ENCODE measurements at regions of chr9 and their contacts with region 1.

Region 1: GRCh38 chr9:73685786-73686185 is 534.1 kb downstream of the ANXA1 start:
- DNase-seq: no peak
- ATAC-seq: no peak
- H3K4me3 ChIP-seq: no peak overlapping the region
- H3K4me3 Mint-ChIP-seq: no peak overlapping the region
- H3K27ac ChIP-seq: no peak overlapping the region
- H3K27ac Mint-ChIP-seq: no peak overlapping the region
- H3K4me1 ChIP-seq: no peaks in the 10 kb centered on the region
- H3K4me1 Mint-ChIP-seq: no peaks in the 10 kb centered on the region
- H3K27me3 ChIP-seq: no peaks in the 10 kb centered on the region
- H3K27me3 Mint-ChIP-seq: no peaks in the 10 kb centered on the region

Region 2: GRCh38 chr9:73067074-73067473 is 618.7 kb before region 1 on chr9:
- CTCF ChIA-PET with region 1: no interaction called
- POLR2A ChIA-PET with region 1: no interaction called
- DNase-seq: no peak
- ATAC-seq: no peak
- H3K4me3 ChIP-seq: no peak overlapping the region
- H3K4me3 Mint-ChIP-seq: no peak overlapping the region
- H3K27ac ChIP-seq: no peak overlapping the region
- H3K27ac Mint-ChIP-seq: no peak overlapping the region
- H3K4me1 ChIP-seq: no peaks in the 10 kb centered on the region
- H3K4me1 Mint-ChIP-seq: no peaks in the 10 kb centered on the region
- H3K27me3 ChIP-seq: peaks cover 0 to 6% of the 10 kb centered on the region in 2 experiments
- H3K27me3 Mint-ChIP-seq: peaks cover 15 to 20% of the 10 kb centered on the region in 2 donors

Region 3: GRCh38 chr9:73079326-73079725 is 606.5 kb before region 1 on chr9:
- CTCF ChIA-PET with region 1: no interaction called
- POLR2A ChIA-PET with region 1: interaction called in 1 of 2 experiments, 11 read pairs
- DNase-seq: peak in 1 of 35 experiments; percentile 30
- ATAC-seq: peak in 1 of 4 experiments; percentile 45
- H3K4me3 ChIP-seq: no peak overlapping the region
- H3K4me3 Mint-ChIP-seq: no peak overlapping the region
- H3K27ac ChIP-seq: no peak overlapping the region
- H3K27ac Mint-ChIP-seq: no peak overlapping the region
- H3K4me1 ChIP-seq: no peaks in the 10 kb centered on the region
- H3K4me1 Mint-ChIP-seq: no peaks in the 10 kb centered on the region
- H3K27me3 ChIP-seq: no peaks in the 10 kb centered on the region
- H3K27me3 Mint-ChIP-seq: peaks cover 8% of the 10 kb centered on the region in 2 donors

Measured in T-cell (primary cell).